ENCODE measurements at regions of chr2 and their contacts with region 1.

Region 1: GRCh38 chr2:222903234-222904220 is 42.7 kb downstream of the ACSL3 start:
- DNase-seq: peak; percentile 11 to 50 (median 24)
- ATAC-seq: peak; percentile 84
- H3K4me3 ChIP-seq: no peak overlapping the region
- H3K27ac ChIP-seq: no peak overlapping the region
- H3K4me1 ChIP-seq: no peaks in the 10 kb centered on the region; a peak in 1 of 5 replicates
- H3K27me3 ChIP-seq: no peaks in the 10 kb centered on the region
- CTCF ChIP-seq: peak; percentile 38 to 68 (median 43); a peak in 4 of 6 replicates
- EP300 ChIP-seq: no peak
- POLR2A ChIP-seq: no peak
- RAD21 ChIP-seq: peak; percentile 58 to 75

Region 2: DNA sequence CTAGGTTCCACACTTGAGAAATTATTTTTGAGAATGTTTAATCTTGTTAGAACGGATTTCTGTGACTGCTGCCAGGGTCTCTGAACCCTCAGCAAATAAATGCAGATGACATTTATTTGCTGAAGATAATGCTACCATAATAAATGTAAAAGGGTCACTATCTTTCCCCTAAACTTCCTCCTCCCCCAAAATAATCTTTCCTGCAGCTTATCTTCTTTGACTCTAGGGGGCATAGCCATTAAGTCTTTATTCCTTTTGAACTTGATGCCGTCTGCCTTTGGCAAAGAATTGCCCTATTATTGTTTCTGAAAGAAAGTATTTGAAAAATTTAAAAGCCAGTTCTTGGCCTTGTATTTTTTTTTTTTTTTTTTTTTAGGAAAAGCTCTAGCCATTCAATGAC is 106.3 kb before region 1 on chr2:
- CTCF ChIA-PET with region 1: interaction called, 3 read pairs
- POLR2A ChIA-PET with region 1: no interaction called
- in situ Hi-C with region 1: no loop called
- intact Hi-C with region 1: loop called (anchors 5 kb)
- DNase-seq: peak in 3 of 4 experiments; percentile 10 to 29 (median 23)
- ATAC-seq: peak; percentile 71
- H3K4me3 ChIP-seq: no peak overlapping the region
- H3K27ac ChIP-seq: no peak overlapping the region
- H3K4me1 ChIP-seq: peaks cover 0 to 6% of the 10 kb centered on the region in 2 experiments; a peak in 4 of 5 replicates
- H3K27me3 ChIP-seq: no peaks in the 10 kb centered on the region
- CTCF ChIP-seq: peak in 2 of 3 experiments; percentile 26 to 56; a peak in 4 of 6 replicates
- EP300 ChIP-seq: no peak
- POLR2A ChIP-seq: no peak
- RAD21 ChIP-seq: peak; percentile 37 to 52; a peak in 3 of 4 replicates

Region 3: DNA sequence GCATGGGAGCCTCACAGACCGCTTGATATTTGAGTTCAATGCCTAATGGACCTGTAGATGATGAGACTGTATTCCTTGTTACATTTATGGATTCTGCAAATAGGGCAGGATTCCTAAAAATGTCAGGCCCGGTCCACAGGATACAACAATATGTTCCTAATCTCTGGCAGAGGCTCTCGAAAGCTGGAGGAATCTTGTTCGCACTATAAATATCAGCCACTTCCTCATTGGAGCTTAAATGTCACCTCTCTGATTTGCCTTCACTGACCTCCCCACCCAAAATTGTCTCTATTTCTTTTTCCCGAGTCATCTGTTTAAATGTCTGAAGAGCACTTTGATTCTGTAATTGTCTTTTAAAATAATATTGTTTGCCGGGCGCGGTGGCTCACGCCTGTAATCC is 54.7 kb before region 1 on chr2:
- CTCF ChIA-PET with region 1: no interaction called
- POLR2A ChIA-PET with region 1: no interaction called
- in situ Hi-C with region 1: no loop called
- intact Hi-C with region 1: no loop called
- DNase-seq: no peak
- ATAC-seq: no peak
- H3K4me3 ChIP-seq: no peak overlapping the region
- H3K27ac ChIP-seq: no peak overlapping the region
- H3K4me1 ChIP-seq: peaks cover 4 to 8% of the 10 kb centered on the region in 2 experiments; a peak in 3 of 5 replicates
- H3K27me3 ChIP-seq: no peaks in the 10 kb centered on the region
- CTCF ChIP-seq: no peak
- EP300 ChIP-seq: no peak
- POLR2A ChIP-seq: no peak
- RAD21 ChIP-seq: no peak

Region 4: GRCh38 chr2:222860740-222861410 is 42.7 kb before region 1 on chr2 and contains the start of gene ACSL3:
- CTCF ChIA-PET with region 1: no interaction called
- POLR2A ChIA-PET with region 1: no interaction called
- in situ Hi-C with region 1: no loop called
- intact Hi-C with region 1: loop called (anchors 5 kb)
- DNase-seq: peak; percentile 88 to 94 (median 90)
- ATAC-seq: peak; percentile 97
- H3K4me3 ChIP-seq: peak within 1 kb of the TSS; percentile 93
- H3K27ac ChIP-seq: peak within 1 kb of the TSS; percentile 92
- H3K4me1 ChIP-seq: peaks cover 6 to 35% of the 10 kb centered on the region in 2 experiments; a peak in 4 of 5 replicates
- H3K27me3 ChIP-seq: no peaks in the 10 kb centered on the region
- CTCF ChIP-seq: peak in 1 of 3 experiments; percentile 8; a peak in 1 of 6 replicates
- EP300 ChIP-seq: 0 out of 2 replicates have a peak, but pooled peaks have one; percentile 19
- POLR2A ChIP-seq: peak; percentile 96
- RAD21 ChIP-seq: 0 out of 4 replicates have a peak, but pooled peaks of 1 of the 2 experiments have one; percentile 1
- polyA plus RNA-seq, gene ACSL3: 21.3 to 28.0 TPM